GM12878 (cell line): ENCODE measurements at regions of chr5 and their contacts with region 1.

Region 1: GRCh38 chr5:32709781-32710549 is 1.2 kb upstream of the NPR3 start:
- DNase-seq: no peak
- ATAC-seq: peak; percentile 90
- H3K4me3 ChIP-seq: peak overlapping the region; percentile 69
- H3K27ac ChIP-seq: no peak overlapping the region
- H3K4me1 ChIP-seq: 0 out of 2 replicates have a peak, but pooled peaks cover 4% of the 10 kb centered on the region
- H3K27me3 ChIP-seq: peaks cover 12 to 32% of the 10 kb centered on the region in 2 experiments
- CTCF ChIP-seq: peak; percentile 54 to 66 (median 66)
- EP300 ChIP-seq: no peak
- POLR2A ChIP-seq: no peak
- RAD21 ChIP-seq: peak; percentile 34; the same call in 1 of the 2 replicates

Region 2: GRCh38 chr5:32413466-32414263 is 296.3 kb before region 1 on chr5:
- CTCF ChIA-PET with region 1: no interaction called
- POLR2A ChIA-PET with region 1: no interaction called
- RAD21 ChIA-PET with region 1: no interaction called
- SMC1A ChIA-PET with region 1: no interaction called
- in situ Hi-C with region 1: no loop called
- intact Hi-C with region 1: no loop called
- DNase-seq: no peak
- ATAC-seq: no peak
- H3K4me3 ChIP-seq: no peak overlapping the region
- H3K27ac ChIP-seq: no peak overlapping the region
- H3K4me1 ChIP-seq: no peaks in the 10 kb centered on the region
- H3K27me3 ChIP-seq: no peaks in the 10 kb centered on the region
- CTCF ChIP-seq: no peak
- EP300 ChIP-seq: no peak
- POLR2A ChIP-seq: no peak
- RAD21 ChIP-seq: no peak

Region 3: DNA sequence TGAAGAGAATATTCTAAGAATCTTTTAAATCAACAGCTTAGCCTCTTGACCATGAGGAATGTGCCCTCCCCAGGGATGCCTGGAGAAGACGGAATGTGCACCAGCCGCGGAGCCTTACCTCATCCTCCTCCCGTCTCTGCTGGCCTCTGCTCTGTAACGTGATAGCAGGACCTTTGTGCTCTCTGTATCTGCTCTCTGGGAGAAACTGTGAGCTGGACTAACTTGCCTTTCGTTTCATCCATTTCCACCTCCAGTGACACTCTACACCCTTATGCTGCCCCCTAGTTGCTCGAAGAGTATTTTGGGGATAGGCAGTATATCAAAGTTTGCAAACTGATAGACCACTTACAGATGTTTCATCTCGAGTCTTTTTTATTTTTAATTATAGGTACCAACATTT is 142.6 kb after region 1 on chr5:
- CTCF ChIA-PET with region 1: interaction called, 6 read pairs
- POLR2A ChIA-PET with region 1: no interaction called
- RAD21 ChIA-PET with region 1: no interaction called
- SMC1A ChIA-PET with region 1: no interaction called
- in situ Hi-C with region 1: no loop called
- intact Hi-C with region 1: loop called (anchors 5 kb)
- DNase-seq: no peak
- ATAC-seq: peak; percentile 39; the same call in 2 of the 3 replicates
- H3K4me3 ChIP-seq: no peak overlapping the region
- H3K27ac ChIP-seq: no peak overlapping the region
- H3K4me1 ChIP-seq: no peaks in the 10 kb centered on the region
- H3K27me3 ChIP-seq: no peaks in the 10 kb centered on the region; a peak in 1 of 4 replicates
- CTCF ChIP-seq: peak in 2 of 3 experiments; percentile 2 to 27; a peak in 2 of 6 replicates
- EP300 ChIP-seq: no peak
- POLR2A ChIP-seq: no peak
- RAD21 ChIP-seq: no peak

Region 4: DNA sequence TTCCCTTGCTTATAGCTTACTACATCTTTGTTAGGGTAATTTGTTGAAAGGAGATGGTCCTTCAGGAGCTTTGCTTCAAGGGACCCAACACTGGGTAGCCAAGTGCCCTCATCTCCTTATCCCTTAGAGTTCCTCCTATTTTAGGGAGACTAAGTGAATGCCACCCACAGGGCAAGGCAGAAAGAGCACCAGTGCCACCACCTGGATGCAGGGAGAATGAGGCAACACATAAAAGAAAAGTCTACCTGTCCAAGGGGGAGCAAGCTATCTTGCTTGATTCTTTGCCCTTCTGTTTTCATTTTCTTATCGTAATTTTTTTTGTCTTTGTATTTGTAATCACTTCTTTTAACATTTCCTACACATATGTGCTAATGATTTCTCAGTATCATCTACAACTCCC is 206.7 kb after region 1 on chr5:
- CTCF ChIA-PET with region 1: interaction called, 3 read pairs
- POLR2A ChIA-PET with region 1: no interaction called
- RAD21 ChIA-PET with region 1: no interaction called
- SMC1A ChIA-PET with region 1: no interaction called
- in situ Hi-C with region 1: no loop called
- intact Hi-C with region 1: loop called (anchors 10 kb)
- DNase-seq: no peak
- ATAC-seq: peak; percentile 26; the same call in 1 of the 3 replicates
- H3K4me3 ChIP-seq: no peak overlapping the region
- H3K27ac ChIP-seq: no peak overlapping the region
- H3K4me1 ChIP-seq: no peaks in the 10 kb centered on the region
- H3K27me3 ChIP-seq: no peaks in the 10 kb centered on the region
- CTCF ChIP-seq: peak in 2 of 3 experiments; percentile 19 to 30; a peak in 2 of 6 replicates
- EP300 ChIP-seq: no peak
- POLR2A ChIP-seq: no peak
- RAD21 ChIP-seq: peak; percentile 33

Region 5: DNA sequence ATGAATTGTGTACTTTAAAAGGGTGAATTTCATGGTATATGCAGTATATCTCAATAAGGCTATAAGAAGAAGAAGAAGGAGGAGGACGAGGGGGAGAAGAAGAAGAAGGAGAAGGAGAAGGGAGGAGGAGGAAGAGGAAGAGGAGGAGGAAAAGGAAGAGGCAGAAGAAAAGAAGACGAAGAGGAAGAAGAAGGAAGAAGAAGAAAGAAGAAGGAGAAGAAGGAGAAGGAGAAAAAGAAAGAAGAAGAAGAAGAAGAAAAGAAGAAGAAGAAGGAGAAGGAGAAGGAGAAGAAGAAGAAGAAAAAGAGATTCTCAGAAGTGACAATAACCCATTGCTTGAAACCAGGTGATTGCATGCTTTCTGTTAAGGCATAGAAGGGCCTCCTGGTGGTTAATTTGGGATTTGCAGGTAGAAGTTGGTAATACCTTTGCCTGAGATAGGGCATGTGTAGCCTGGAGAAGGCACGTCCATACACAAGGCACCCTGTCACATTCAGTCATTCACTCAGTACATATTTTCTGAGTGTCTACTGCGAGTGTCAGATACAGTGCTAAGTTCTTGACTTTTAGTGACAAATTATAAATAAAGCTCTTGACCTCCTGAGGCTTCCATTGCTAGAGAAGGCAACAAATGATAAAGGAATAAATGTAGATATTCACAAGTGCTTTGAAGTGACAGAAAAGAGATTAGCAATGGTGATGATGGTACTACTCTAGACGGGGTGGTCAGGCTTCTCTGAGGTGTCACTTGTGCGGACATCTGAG is 232.4 kb after region 1 on chr5:
- CTCF ChIA-PET with region 1: interaction called, 3 read pairs
- POLR2A ChIA-PET with region 1: no interaction called
- RAD21 ChIA-PET with region 1: no interaction called
- SMC1A ChIA-PET with region 1: no interaction called
- in situ Hi-C with region 1: no loop called
- intact Hi-C with region 1: loop called (anchors 1 kb)
- DNase-seq: no peak
- ATAC-seq: peak; percentile 86
- H3K4me3 ChIP-seq: no peak overlapping the region
- H3K27ac ChIP-seq: no peak overlapping the region
- H3K4me1 ChIP-seq: no peaks in the 10 kb centered on the region
- H3K27me3 ChIP-seq: no peaks in the 10 kb centered on the region
- CTCF ChIP-seq: peak; percentile 35 to 61 (median 49)
- EP300 ChIP-seq: no peak
- POLR2A ChIP-seq: no peak
- RAD21 ChIP-seq: peak; percentile 41

Region 6: GRCh38 chr5:33180900-33181299 is 470.9 kb after region 1 on chr5:
- CTCF ChIA-PET with region 1: no interaction called
- POLR2A ChIA-PET with region 1: no interaction called
- RAD21 ChIA-PET with region 1: no interaction called
- SMC1A ChIA-PET with region 1: no interaction called
- in situ Hi-C with region 1: no loop called
- intact Hi-C with region 1: loop called (anchors 10 kb)
- DNase-seq: no peak
- ATAC-seq: no peak
- H3K4me3 ChIP-seq: no peak overlapping the region
- H3K27ac ChIP-seq: no peak overlapping the region
- H3K4me1 ChIP-seq: no peaks in the 10 kb centered on the region
- H3K27me3 ChIP-seq: no peaks in the 10 kb centered on the region
- CTCF ChIP-seq: no peak
- EP300 ChIP-seq: no peak
- POLR2A ChIP-seq: no peak
- RAD21 ChIP-seq: 0 out of 2 replicates have a peak, but pooled peaks have one; percentile 10

Region 7: DNA sequence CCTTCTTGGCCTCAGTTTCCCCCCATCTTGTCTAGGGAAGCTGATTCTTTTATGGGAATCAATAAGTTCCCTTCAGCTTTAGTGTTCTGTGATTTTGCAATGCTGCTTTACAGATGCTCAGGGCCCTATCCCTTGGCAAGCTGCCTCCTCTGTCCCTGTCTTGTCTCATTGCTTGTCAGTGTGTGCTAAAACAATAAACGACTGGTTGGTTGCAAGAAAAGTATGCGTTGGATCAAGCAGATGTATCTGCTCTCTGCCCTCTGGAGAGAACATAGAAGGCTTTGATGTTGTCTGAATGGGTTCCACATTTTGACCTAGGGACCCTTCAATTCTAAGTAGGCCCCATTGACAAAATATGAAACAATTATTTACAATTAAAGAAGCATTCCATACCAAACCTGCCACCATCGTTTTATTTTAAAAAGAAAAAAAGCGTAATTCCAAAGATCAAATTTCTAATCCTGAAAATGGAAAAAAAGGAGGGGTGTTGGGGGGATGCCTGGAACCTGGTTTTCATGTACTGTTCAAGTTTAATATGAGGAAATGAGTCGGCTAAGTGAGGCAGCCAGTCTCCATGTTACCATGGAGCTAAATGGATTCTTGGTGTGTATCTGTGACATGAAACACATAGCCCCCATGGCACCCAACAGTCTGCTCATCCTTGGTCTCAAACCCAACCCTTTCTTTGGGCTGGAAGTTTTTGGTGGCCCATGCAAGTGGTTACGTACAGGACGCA is 699.6 kb after region 1 on chr5:
- CTCF ChIA-PET with region 1: no interaction called
- POLR2A ChIA-PET with region 1: no interaction called
- RAD21 ChIA-PET with region 1: no interaction called
- SMC1A ChIA-PET with region 1: no interaction called
- in situ Hi-C with region 1: loop called (anchors 10 kb)
- intact Hi-C with region 1: no loop called
- DNase-seq: no peak
- ATAC-seq: no peak
- H3K4me3 ChIP-seq: no peak overlapping the region
- H3K27ac ChIP-seq: no peak overlapping the region
- H3K4me1 ChIP-seq: no peaks in the 10 kb centered on the region
- H3K27me3 ChIP-seq: no peaks in the 10 kb centered on the region
- CTCF ChIP-seq: no peak
- EP300 ChIP-seq: no peak
- POLR2A ChIP-seq: no peak
- RAD21 ChIP-seq: no peak

Region 8: GRCh38 chr5:33423018-33423630 is 713.2 kb after region 1 on chr5:
- CTCF ChIA-PET with region 1: interaction called, 3 read pairs
- POLR2A ChIA-PET with region 1: no interaction called
- RAD21 ChIA-PET with region 1: interaction called, 4 read pairs
- SMC1A ChIA-PET with region 1: no interaction called
- in situ Hi-C with region 1: loop called (anchors 10 kb)
- intact Hi-C with region 1: loop called (anchors 1 kb)
- DNase-seq: no peak
- ATAC-seq: peak; percentile 61
- H3K4me3 ChIP-seq: no peak overlapping the region
- H3K27ac ChIP-seq: no peak overlapping the region
- H3K4me1 ChIP-seq: no peaks in the 10 kb centered on the region
- H3K27me3 ChIP-seq: no peaks in the 10 kb centered on the region
- CTCF ChIP-seq: peak; percentile 26 to 51 (median 33); a peak in 4 of 6 replicates
- EP300 ChIP-seq: no peak
- POLR2A ChIP-seq: no peak
- RAD21 ChIP-seq: peak; percentile 57